Right cardiac atrium (tissue), 5 donors: ENCODE measurements at regions of chr14 and their contacts with region 1.

Region 1: DNA sequence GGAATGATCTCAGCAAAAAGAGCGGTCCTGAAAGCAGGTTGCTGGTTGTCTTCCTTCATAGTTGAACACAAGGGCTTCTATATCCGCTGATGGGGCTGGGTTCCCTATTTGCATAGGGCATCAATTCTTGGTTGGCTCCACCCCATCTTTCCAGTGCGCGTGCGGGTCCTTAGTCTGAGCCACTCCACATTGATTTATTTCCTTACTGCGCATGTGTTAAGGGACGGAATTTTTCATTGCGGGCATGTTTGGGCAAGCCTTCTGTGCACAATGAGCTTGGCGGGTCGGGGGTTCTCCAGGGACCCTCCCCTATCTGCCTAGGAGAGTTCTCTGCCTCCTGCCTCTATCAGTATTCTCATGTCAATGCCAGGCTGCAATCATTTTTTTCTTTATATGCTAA is 21.2 kb upstream of the DLGAP5 start:
- DNase-seq: no peak
- ATAC-seq: no peak
- H3K4me3 ChIP-seq: no peak overlapping the region
- H3K27ac ChIP-seq: no peak overlapping the region
- H3K4me1 ChIP-seq: no peaks in the 10 kb centered on the region
- H3K27me3 ChIP-seq: no peaks in the 10 kb centered on the region

Region 2: DNA sequence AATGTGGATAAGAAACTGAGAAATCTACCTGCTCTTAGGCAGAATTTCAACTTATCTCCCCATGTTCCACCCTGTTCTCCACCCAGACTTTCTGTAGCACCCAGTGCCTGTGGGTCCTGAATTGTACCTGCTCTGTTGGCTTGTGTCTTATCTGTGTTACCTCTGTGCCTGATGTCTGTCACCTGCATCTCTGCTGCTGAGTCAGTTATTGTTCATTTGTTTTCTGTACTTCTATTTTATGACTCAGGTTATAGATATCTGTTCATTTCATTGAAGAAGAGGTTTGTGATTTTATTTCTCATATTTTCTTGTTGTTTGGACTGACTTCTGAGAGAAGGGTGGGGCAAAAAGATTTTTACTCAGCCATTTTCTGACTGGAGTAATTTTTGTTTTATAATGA is 173.9 kb before region 1 on chr14:
- intact Hi-C with region 1: no loop called
- DNase-seq: no peak
- ATAC-seq: no peak
- H3K4me3 ChIP-seq: no peak overlapping the region
- H3K27ac ChIP-seq: no peak overlapping the region
- H3K4me1 ChIP-seq: no peaks in the 10 kb centered on the region
- H3K27me3 ChIP-seq: no peaks in the 10 kb centered on the region

Region 3: DNA sequence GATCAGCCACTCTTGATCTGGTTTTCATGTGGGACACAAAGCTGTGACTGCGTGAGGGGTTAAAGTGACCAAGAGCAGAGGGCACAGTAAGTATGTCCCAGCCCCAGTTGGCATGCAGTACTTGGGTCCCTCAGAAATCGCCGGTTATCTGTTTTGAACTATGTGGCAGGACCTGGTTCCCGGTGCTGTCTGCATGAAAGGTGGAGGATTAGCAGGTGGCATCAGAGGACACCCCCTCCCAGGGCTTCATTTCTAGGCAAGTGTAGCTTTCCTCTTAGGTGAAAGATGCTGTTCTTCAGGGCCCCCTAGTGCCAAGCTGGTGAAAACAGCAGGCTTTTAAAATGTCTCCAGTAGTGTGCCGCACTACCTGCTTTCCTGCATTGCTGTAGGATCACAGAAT is 141.9 kb after region 1 on chr14:
- intact Hi-C with region 1: loop called in 1 of 4 experiments (anchors 10 kb)
- DNase-seq: peak in 2 of 3 donors; percentile 19 to 46
- ATAC-seq: peak; percentile 66 to 81
- H3K4me3 ChIP-seq: no peak overlapping the region
- H3K27ac ChIP-seq: no peak overlapping the region
- H3K4me1 ChIP-seq: no peaks in the 10 kb centered on the region
- H3K27me3 ChIP-seq: no peaks in the 10 kb centered on the region

Region 4: DNA sequence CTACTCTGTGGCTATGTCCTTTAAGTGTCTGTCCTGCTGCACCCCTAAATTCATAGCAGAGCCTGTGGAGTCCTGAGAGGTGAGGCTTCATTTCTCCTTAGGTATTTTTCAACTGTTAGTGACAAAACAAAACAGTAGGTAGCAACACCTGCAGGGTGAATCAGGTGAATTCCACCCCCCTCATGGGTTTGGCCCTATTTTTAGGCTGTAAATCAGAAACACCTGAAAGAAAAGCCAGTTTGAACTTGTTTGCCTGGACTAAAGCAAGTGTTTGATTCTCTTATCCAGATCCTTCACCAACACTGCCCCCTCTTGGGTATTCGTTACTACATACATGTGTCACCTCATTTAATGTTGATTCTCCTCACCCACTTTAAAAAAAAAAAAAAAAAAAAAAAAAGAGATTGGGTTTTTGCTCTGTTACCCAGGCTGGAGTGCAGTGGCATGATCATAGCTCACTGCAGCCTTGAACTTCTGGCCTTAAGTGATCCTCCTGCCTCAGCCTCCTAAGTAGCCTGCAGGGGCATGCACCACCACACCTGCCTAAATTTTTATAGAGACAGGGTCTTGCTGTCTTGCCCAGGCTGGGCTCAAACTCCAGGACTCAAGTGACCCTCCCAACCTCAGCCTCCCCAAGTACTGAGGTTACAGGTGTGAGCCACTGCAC is 217.5 kb after region 1 on chr14:
- intact Hi-C with region 1: loop called in 2 of 4 experiments (anchors 2 to 10 kb)
- DNase-seq: no peak
- ATAC-seq: peak; percentile 75 to 78
- H3K4me3 ChIP-seq: no peak overlapping the region
- H3K27ac ChIP-seq: no peak overlapping the region
- H3K4me1 ChIP-seq: no peaks in the 10 kb centered on the region
- H3K27me3 ChIP-seq: no peaks in the 10 kb centered on the region